K562 (cell line): ENCODE measurements at regions of chr12 and their contacts with region 1.

Region 1: GRCh38 chr12:1916371-1917171 is 1.9 kb downstream of the CACNA2D4 start:
- DNase-seq: peak; percentile 58 to 73 (median 69)
- ATAC-seq: peak; percentile 65
- H3K4me3 ChIP-seq: no peak overlapping the region
- H3K27ac ChIP-seq: no peak overlapping the region
- H3K4me1 ChIP-seq: peaks cover 36 to 44% of the 10 kb centered on the region in 2 experiments
- H3K27me3 ChIP-seq: no peaks in the 10 kb centered on the region
- CTCF ChIP-seq: no peak
- EP300 ChIP-seq: 0 out of 2 replicates have a peak, but pooled peaks have one; percentile 10
- POLR2A ChIP-seq: no peak
- RAD21 ChIP-seq: no peak

Region 2: GRCh38 chr12:1812650-1813302 is 103.8 kb before region 1 on chr12:
- CTCF ChIA-PET with region 1: no interaction called
- POLR2A ChIA-PET with region 1: interaction called, 3 read pairs
- in situ Hi-C with region 1: no loop called
- intact Hi-C with region 1: loop called (anchors 10 kb)
- DNase-seq: peak; percentile 31 to 47 (median 37)
- ATAC-seq: peak; percentile 78
- H3K4me3 ChIP-seq: no peak overlapping the region
- H3K27ac ChIP-seq: no peak overlapping the region
- H3K4me1 ChIP-seq: peaks cover 27 to 30% of the 10 kb centered on the region in 2 experiments
- H3K27me3 ChIP-seq: peaks cover 11 to 39% of the 10 kb centered on the region in 2 experiments; a peak in 4 of 5 replicates
- CTCF ChIP-seq: no peak
- EP300 ChIP-seq: peak; percentile 62
- POLR2A ChIP-seq: no peak
- RAD21 ChIP-seq: no peak

Region 3: GRCh38 chr12:1880153-1880845 is 36.3 kb before region 1 on chr12:
- CTCF ChIA-PET with region 1: no interaction called
- POLR2A ChIA-PET with region 1: no interaction called
- in situ Hi-C with region 1: no loop called
- intact Hi-C with region 1: no loop called
- DNase-seq: no peak
- ATAC-seq: no peak; the same call in 2 of the 3 replicates
- H3K4me3 ChIP-seq: no peak overlapping the region
- H3K27ac ChIP-seq: no peak overlapping the region
- H3K4me1 ChIP-seq: peaks cover 8% of the 10 kb centered on the region in 2 experiments; a peak in 4 of 5 replicates
- H3K27me3 ChIP-seq: peaks cover 2 to 32% of the 10 kb centered on the region in 2 experiments; a peak in 2 of 5 replicates
- CTCF ChIP-seq: no peak
- EP300 ChIP-seq: no peak
- POLR2A ChIP-seq: no peak
- RAD21 ChIP-seq: no peak